ENCODE measurements at regions of chr17 and their contacts with region 1.

Region 1: GRCh38 chr17:59561042-59561441 is 4.4 kb upstream of the DHX40 start:
- DNase-seq: peak in 1 of 35 experiments; percentile 28
- ATAC-seq: no peak
- H3K4me3 ChIP-seq: no peak overlapping the region
- H3K4me3 Mint-ChIP-seq: no peak overlapping the region
- H3K27ac ChIP-seq: no peak overlapping the region
- H3K27ac Mint-ChIP-seq: no peak overlapping the region
- H3K4me1 ChIP-seq: peaks cover under 1 to 10% of the 10 kb centered on the region in 2 experiments
- H3K4me1 Mint-ChIP-seq: peaks cover 9 to 11% (median 9%) of the 10 kb centered on the region in 3 donors
- H3K27me3 ChIP-seq: no peaks in the 10 kb centered on the region
- H3K27me3 Mint-ChIP-seq: no peaks in the 10 kb centered on the region

Region 2: GRCh38 chr17:58270476-58271215 is 1290.4 kb before region 1 on chr17:
- CTCF ChIA-PET with region 1: no interaction called
- POLR2A ChIA-PET with region 1: no interaction called
- DNase-seq: no peak
- ATAC-seq: no peak
- H3K4me3 ChIP-seq: no peak overlapping the region
- H3K4me3 Mint-ChIP-seq: no peak overlapping the region
- H3K27ac ChIP-seq: no peak overlapping the region
- H3K27ac Mint-ChIP-seq: no peak overlapping the region
- H3K4me1 ChIP-seq: no peaks in the 10 kb centered on the region
- H3K4me1 Mint-ChIP-seq: no peaks in the 10 kb centered on the region
- H3K27me3 ChIP-seq: peaks cover 0 to 52% of the 10 kb centered on the region in 2 experiments
- H3K27me3 Mint-ChIP-seq: peaks cover 4 to 19% of the 10 kb centered on the region in 2 donors

Region 3: GRCh38 chr17:59289626-59290301 is 271.3 kb before region 1 on chr17:
- CTCF ChIA-PET with region 1: no interaction called
- POLR2A ChIA-PET with region 1: interaction called in 1 of 2 experiments, 16 read pairs
- DNase-seq: no peak
- ATAC-seq: no peak
- H3K4me3 ChIP-seq: no peak overlapping the region
- H3K4me3 Mint-ChIP-seq: no peak overlapping the region
- H3K27ac ChIP-seq: no peak overlapping the region
- H3K27ac Mint-ChIP-seq: no peak overlapping the region
- H3K4me1 ChIP-seq: no peaks in the 10 kb centered on the region
- H3K4me1 Mint-ChIP-seq: peaks cover 0 to 2% (median 0%) of the 10 kb centered on the region in 3 donors
- H3K27me3 ChIP-seq: no peaks in the 10 kb centered on the region
- H3K27me3 Mint-ChIP-seq: peaks cover 0 to 2% of the 10 kb centered on the region in 2 donors

Region 4: DNA sequence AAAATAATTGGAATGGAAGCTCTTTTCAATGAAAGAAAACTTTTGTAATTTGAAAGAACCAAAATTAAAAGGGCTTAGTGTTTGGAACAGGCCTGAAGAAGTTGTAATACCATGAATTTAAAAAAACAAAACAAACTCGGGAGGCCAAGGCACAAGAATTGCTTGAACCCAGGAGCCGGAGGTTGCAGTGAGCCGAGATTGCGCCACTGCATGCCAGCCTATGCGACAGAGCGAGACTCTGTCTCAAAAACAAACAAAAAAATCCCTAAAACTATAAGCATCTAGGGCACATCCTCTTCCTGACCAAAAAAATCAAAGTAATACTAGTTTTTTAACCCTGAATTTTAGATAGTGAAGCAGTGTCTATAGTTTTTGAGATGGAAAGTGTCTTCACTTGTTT is 71.4 kb after region 1 on chr17:
- CTCF ChIA-PET with region 1: interaction called in 1 of 2 experiments, 3 read pairs
- POLR2A ChIA-PET with region 1: interaction called in 1 of 2 experiments, 16 read pairs
- DNase-seq: no peak
- ATAC-seq: no peak
- H3K4me3 ChIP-seq: no peak overlapping the region
- H3K4me3 Mint-ChIP-seq: no peak overlapping the region
- H3K27ac ChIP-seq: no peak overlapping the region
- H3K27ac Mint-ChIP-seq: peak overlapping the region in 1 of 2 donors; percentile 34
- H3K4me1 ChIP-seq: peaks cover 17 to 19% of the 10 kb centered on the region in 2 experiments
- H3K4me1 Mint-ChIP-seq: peaks cover 65 to 84% (median 75%) of the 10 kb centered on the region in 3 donors
- H3K27me3 ChIP-seq: no peaks in the 10 kb centered on the region
- H3K27me3 Mint-ChIP-seq: no peaks in the 10 kb centered on the region